ENCODE measurements at regions of chr1 and their contacts with region 1.

Region 1: GRCh38 chr1:48236716-48237470 is 14.4 kb downstream of the SLC5A9 start:
- DNase-seq: peak in 1 of 2 experiments; percentile 52
- H3K4me3 ChIP-seq: no peak overlapping the region
- H3K27ac ChIP-seq: no peak overlapping the region
- H3K4me1 ChIP-seq: no peaks in the 10 kb centered on the region
- H3K27me3 ChIP-seq: no peaks in the 10 kb centered on the region
- CTCF ChIP-seq: peak in 2 of 3 experiments; percentile 66 to 82; a peak in 3 of 4 replicates
- EP300 ChIP-seq: no peak
- POLR2A ChIP-seq: no peak
- RAD21 ChIP-seq: peak; percentile 89 to 92

Region 2: GRCh38 chr1:48031676-48032075 is 205.2 kb before region 1 on chr1:
- CTCF ChIA-PET with region 1: no interaction called
- POLR2A ChIA-PET with region 1: no interaction called
- DNase-seq: no peak
- H3K4me3 ChIP-seq: no peak overlapping the region
- H3K27ac ChIP-seq: no peak overlapping the region
- H3K4me1 ChIP-seq: peaks cover 0 to 7% (median 4%) of the 10 kb centered on the region in 4 experiments; a peak in 4 of 7 replicates
- H3K27me3 ChIP-seq: no peaks in the 10 kb centered on the region
- CTCF ChIP-seq: no peak
- EP300 ChIP-seq: no peak
- POLR2A ChIP-seq: no peak
- RAD21 ChIP-seq: no peak

Region 3: DNA sequence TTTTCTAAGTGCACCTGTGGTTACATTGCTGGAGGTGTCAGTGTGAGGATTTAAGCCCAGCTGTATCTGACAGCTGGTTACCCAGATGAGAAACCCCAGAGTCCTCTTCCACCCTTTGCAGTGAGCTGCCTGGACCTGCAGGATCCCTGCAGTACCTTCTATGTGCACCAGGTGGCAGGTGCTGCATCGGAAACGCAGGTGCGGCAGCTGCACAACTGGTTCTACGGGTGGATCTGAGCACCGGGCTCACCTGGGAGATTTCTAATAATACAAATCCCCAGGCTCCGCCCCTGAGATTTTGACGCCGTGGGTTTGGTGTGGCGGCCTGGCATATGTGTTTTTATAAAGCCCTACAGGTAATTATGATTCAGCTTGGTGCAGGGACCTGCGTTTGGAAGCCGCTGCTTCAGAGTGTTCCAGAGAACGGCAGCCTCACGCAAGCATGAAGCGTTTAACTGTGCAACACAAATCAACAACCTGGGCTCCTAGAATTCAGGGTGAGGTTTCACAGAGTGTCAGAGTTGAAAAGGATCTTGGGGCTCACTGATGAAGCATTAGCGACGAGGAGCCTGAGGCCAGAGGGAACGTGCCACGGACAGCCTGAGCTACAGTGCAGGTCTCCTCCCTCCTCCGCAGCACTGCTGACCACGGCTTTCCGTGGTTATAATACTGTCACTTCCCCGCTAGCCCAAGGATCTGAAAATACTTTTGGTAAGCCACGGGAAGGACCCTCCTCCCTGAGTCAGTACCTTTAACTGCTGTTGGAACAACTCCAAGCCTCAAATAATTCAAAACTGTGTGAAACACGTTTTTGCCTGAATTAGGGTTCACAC is 143.0 kb before region 1 on chr1:
- CTCF ChIA-PET with region 1: interaction called, 16 read pairs
- POLR2A ChIA-PET with region 1: no interaction called
- DNase-seq: peak; percentile 43 to 95
- H3K4me3 ChIP-seq: peak overlapping the region in 1 of 4 experiments; percentile 42; a peak in 1 of 8 replicates
- H3K27ac ChIP-seq: no peak overlapping the region
- H3K4me1 ChIP-seq: no peaks in the 10 kb centered on the region
- H3K27me3 ChIP-seq: peaks cover 0 to 4% (median 1%) of the 10 kb centered on the region in 4 experiments; a peak in 1 of 7 replicates
- CTCF ChIP-seq: peak; percentile 93 to 97 (median 97)
- EP300 ChIP-seq: no peak
- POLR2A ChIP-seq: no peak
- RAD21 ChIP-seq: peak; percentile 83 to 89

Region 4: DNA sequence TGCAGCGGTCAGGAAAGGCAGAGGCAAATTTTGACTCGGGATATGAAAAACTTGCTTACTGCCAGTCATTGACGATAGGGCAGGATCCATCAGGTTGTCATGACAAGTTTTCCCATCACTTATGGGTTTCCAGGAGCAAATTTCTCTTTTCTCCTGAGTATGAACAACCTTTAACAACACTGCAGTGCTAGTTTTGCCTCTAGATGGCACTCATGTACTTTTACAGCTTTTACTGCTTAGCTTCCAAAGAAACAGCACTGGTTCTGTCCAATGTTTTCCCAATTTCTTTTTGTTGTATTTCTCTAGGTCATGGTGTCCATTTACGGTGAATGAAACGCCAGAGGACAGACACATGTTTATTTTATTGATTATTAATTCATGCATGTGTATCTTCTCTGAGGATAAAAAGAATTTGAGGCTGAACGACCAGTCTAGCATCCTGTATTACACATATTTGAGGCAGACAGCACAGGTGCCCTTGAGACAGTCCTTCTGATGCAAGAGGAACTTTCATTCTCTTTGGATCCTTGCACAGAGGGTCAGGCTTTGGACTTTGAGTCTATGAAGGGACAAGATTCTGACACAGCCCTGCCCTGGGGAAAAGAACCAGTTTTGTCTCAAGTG is 127.4 kb before region 1 on chr1:
- CTCF ChIA-PET with region 1: interaction called, 38 read pairs
- POLR2A ChIA-PET with region 1: no interaction called
- DNase-seq: no peak
- H3K4me3 ChIP-seq: no peak overlapping the region
- H3K27ac ChIP-seq: no peak overlapping the region
- H3K4me1 ChIP-seq: peaks cover 0 to 4% (median under 1%) of the 10 kb centered on the region in 4 experiments; a peak in 1 of 7 replicates
- H3K27me3 ChIP-seq: no peaks in the 10 kb centered on the region
- CTCF ChIP-seq: peak in 2 of 3 experiments; percentile 81 to 87; a peak in 3 of 4 replicates
- EP300 ChIP-seq: no peak
- POLR2A ChIP-seq: no peak
- RAD21 ChIP-seq: peak; percentile 94 to 96

Region 5: GRCh38 chr1:48114596-48115382 is 122.1 kb before region 1 on chr1:
- CTCF ChIA-PET with region 1: interaction called, 38 read pairs
- POLR2A ChIA-PET with region 1: no interaction called
- DNase-seq: no peak
- H3K4me3 ChIP-seq: no peak overlapping the region
- H3K27ac ChIP-seq: no peak overlapping the region
- H3K4me1 ChIP-seq: peaks cover 0 to 4% (median under 1%) of the 10 kb centered on the region in 4 experiments; a peak in 1 of 7 replicates
- H3K27me3 ChIP-seq: no peaks in the 10 kb centered on the region
- CTCF ChIP-seq: no peak
- EP300 ChIP-seq: no peak
- POLR2A ChIP-seq: no peak
- RAD21 ChIP-seq: no peak

Region 6: DNA sequence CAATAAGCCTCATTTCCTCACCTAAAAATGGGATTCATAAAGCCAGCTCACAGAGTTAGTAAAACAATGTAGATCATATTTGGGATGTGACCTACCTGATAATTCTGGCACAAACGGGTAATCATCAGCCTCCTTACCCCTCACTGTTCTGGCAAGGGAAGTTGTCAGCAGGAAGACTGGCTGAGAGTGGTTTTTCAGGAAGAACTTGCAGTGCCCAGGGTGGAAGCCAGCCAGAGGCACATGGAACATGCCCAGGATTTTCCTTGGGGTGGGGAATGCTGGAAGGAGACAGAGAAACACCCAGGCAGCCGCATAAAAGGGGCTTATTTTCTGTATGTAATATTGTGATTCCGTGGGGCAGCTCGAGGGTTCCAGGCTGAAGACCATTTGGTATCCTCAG is 22.1 kb before region 1 on chr1:
- CTCF ChIA-PET with region 1: interaction called, 41 read pairs
- POLR2A ChIA-PET with region 1: interaction called, 3 read pairs
- DNase-seq: no peak
- H3K4me3 ChIP-seq: no peak overlapping the region
- H3K27ac ChIP-seq: no peak overlapping the region; the same call in 1 of the 2 replicates
- H3K4me1 ChIP-seq: peaks cover 1 to 9% (median 5%) of the 10 kb centered on the region in 4 experiments; a peak in 3 of 7 replicates
- H3K27me3 ChIP-seq: no peaks in the 10 kb centered on the region
- CTCF ChIP-seq: no peak
- EP300 ChIP-seq: no peak
- POLR2A ChIP-seq: no peak
- RAD21 ChIP-seq: no peak

Region 7: DNA sequence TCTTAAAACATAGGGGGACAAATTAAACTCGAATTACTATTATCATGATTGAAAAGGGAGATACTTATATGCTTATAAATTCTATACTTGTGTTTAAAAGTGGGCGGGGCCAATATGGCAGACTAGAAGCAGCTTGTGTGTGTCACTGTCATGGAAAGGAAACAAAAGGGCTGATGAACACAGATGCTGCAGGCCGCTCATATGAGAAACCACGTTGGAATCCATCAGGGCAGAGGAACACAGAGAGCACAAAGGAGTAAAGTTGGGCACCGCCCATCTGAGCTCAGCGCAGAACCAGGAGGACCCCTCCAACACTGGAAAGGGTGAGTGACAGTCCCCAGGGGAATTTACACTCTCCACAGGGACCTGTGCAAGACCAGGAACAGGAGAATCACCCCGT is 92.6 kb after region 1 on chr1:
- CTCF ChIA-PET with region 1: no interaction called
- POLR2A ChIA-PET with region 1: no interaction called
- DNase-seq: no peak
- H3K4me3 ChIP-seq: no peak overlapping the region
- H3K27ac ChIP-seq: no peak overlapping the region
- H3K4me1 ChIP-seq: no peaks in the 10 kb centered on the region
- H3K27me3 ChIP-seq: no peaks in the 10 kb centered on the region
- CTCF ChIP-seq: no peak
- EP300 ChIP-seq: no peak
- POLR2A ChIP-seq: no peak
- RAD21 ChIP-seq: no peak

Measured in H1 (cell line).